ENCODE measurements at regions of chr22 and their contacts with region 1.

Region 1: DNA sequence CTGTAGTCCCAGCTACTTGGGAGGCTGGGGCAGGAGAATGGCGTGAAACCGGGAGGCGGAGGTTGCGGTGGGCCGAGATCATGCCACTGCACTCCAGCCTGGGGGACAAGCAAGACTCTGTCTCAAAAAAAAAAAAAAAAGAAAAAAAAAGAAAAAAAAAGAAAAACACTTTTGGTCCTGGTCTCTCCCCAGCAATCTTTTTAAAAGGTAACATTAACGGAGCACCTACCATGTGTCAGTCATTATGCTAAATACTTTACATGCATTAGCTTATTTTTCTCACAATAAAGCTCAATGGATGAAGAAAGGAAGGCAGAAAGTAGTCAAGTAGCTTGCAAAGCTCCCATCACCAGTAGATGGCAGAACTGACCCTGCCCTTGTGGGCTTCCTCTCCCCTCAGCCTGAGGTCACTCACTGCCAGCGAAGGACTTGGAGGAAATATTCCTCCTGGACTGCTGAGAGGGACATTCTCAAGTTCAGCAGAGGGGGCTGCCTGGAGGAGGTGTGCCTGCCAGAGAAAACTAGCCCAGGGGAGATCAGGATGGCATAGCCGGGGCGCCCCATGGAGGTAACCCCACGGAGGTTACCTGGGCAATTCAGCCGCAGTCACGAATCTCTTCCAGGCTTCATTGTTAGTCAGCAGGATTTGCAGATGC is 15.5 kb downstream of the APOL3 start:
- DNase-seq: peak; percentile 25 to 64 (median 57)
- H3K4me3 ChIP-seq: no peak overlapping the region
- H3K4me3 Mint-ChIP-seq: no peak overlapping the region
- H3K27ac ChIP-seq: no peak overlapping the region
- H3K27ac Mint-ChIP-seq: peak overlapping the region in 3 of 7 donors; percentile 59 to 75 (median 64)
- H3K4me1 ChIP-seq: peaks cover 15% of the 10 kb centered on the region in 2 donors
- H3K4me1 Mint-ChIP-seq: peaks cover 29% of the 10 kb centered on the region
- H3K27me3 ChIP-seq: no peaks in the 10 kb centered on the region
- H3K27me3 Mint-ChIP-seq: peaks cover 0 to 1% (median 0%) of the 10 kb centered on the region in 3 donors
- CTCF ChIP-seq: peak; percentile 70

Region 2: DNA sequence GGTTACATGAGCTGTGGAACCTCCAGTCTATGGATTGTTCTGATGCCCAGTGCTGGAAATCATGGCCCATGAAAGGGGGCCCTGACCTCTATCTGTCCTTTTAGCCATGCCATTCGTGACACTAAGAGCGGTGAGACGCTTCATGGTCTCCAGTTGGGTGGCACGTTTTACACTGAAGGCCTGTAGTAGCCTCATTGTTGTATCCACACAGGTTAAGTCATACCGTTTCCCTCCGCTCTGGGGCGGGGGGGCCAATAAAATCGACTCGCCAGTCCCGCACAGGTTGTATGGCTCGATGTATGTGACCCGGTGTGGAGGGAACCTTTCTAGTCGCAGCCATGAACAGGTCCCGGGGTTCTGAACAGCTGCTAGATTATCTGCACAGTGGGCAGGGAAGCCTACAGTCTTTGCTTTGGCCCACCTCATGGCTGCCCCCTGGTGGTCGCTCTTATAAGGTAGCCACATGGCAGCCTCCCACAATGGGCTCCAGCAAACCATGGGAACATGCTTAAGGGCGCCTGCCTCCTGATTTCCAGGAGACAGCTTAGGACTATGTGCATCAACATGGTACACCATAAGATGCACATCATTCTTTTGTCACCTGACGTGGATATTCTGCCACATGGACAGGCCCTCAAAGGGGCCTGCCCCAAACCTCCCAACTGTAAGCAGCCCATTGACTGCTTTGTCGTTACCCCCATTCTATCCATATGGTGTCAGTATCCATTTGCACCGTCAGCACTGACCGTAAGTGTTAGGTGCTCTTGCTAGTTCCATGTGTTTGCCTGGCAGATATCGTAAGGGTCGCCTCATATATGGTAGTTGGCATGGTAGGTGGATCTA is 35.2 kb after region 1 on chr22:
- intact Hi-C with region 1: loop called (anchors 1 to 2 kb)
- DNase-seq: peak; percentile 68 to 80 (median 75)
- H3K4me3 ChIP-seq: no peak overlapping the region
- H3K4me3 Mint-ChIP-seq: no peak overlapping the region
- H3K27ac ChIP-seq: no peak overlapping the region
- H3K27ac Mint-ChIP-seq: no peak overlapping the region
- H3K4me1 ChIP-seq: peaks cover 4 to 5% of the 10 kb centered on the region in 2 donors
- H3K4me1 Mint-ChIP-seq: peaks cover 14% of the 10 kb centered on the region
- H3K27me3 ChIP-seq: no peaks in the 10 kb centered on the region
- H3K27me3 Mint-ChIP-seq: peaks cover 0 to 2% (median 0%) of the 10 kb centered on the region in 3 donors
- CTCF ChIP-seq: peak; percentile 89

Region 3: GRCh38 chr22:36334709-36335620 is 190.0 kb after region 1 on chr22:
- intact Hi-C with region 1: no loop called
- DNase-seq: peak; percentile 41 to 62 (median 56)
- H3K4me3 ChIP-seq: peak overlapping the region in 1 of 3 experiments; percentile 52
- H3K4me3 Mint-ChIP-seq: peak overlapping the region in 1 of 2 donors; percentile 39
- H3K27ac ChIP-seq: peak overlapping the region; percentile 67 to 92
- H3K27ac Mint-ChIP-seq: peak overlapping the region; percentile 78 to 99 (median 90)
- H3K4me1 ChIP-seq: peaks cover 84 to 85% of the 10 kb centered on the region in 2 donors
- H3K4me1 Mint-ChIP-seq: peaks cover 88% of the 10 kb centered on the region
- H3K27me3 ChIP-seq: no peaks in the 10 kb centered on the region
- H3K27me3 Mint-ChIP-seq: no peaks in the 10 kb centered on the region
- CTCF ChIP-seq: no peak